Testis (tissue), 5 donors: ENCODE measurements at regions of chr10 and their contacts with region 1.

Region 1: GRCh38 chr10:102229810-102230263 is 3.7 kb downstream of the ELOVL3 start:
- DNase-seq: peak; percentile 89
- H3K4me3 ChIP-seq: peak overlapping the region; percentile 42 to 56
- H3K27ac ChIP-seq: no peak overlapping the region
- H3K4me1 ChIP-seq: peaks cover 20% of the 10 kb centered on the region
- H3K27me3 ChIP-seq: no peaks in the 10 kb centered on the region
- CTCF ChIP-seq: peak; percentile 81 to 90 (median 90)
- POLR2A ChIP-seq: no peak

Region 2: GRCh38 chr10:102352066-102352715 is 122.4 kb after region 1 on chr10:
- intact Hi-C with region 1: loop called (anchors 5 kb)
- DNase-seq: peak; percentile 43
- H3K4me3 ChIP-seq: no peak overlapping the region
- H3K27ac ChIP-seq: no peak overlapping the region
- H3K4me1 ChIP-seq: no peaks in the 10 kb centered on the region
- H3K27me3 ChIP-seq: no peaks in the 10 kb centered on the region
- CTCF ChIP-seq: peak; percentile 70 to 84 (median 81)
- POLR2A ChIP-seq: no peak

Region 3: GRCh38 chr10:102419269-102420180 is 189.7 kb after region 1 on chr10:
- intact Hi-C with region 1: no loop called
- DNase-seq: peak; percentile 83
- H3K4me3 ChIP-seq: peak overlapping the region; percentile 80 to 96
- H3K27ac ChIP-seq: peak overlapping the region in 1 of 2 donors; percentile 80
- H3K4me1 ChIP-seq: peaks cover 23% of the 10 kb centered on the region
- H3K27me3 ChIP-seq: no peaks in the 10 kb centered on the region
- CTCF ChIP-seq: no peak
- POLR2A ChIP-seq: no peak